Left lung (tissue), 14 donors: ENCODE measurements at regions of chr13 and their contacts with region 1.

Region 1: DNA sequence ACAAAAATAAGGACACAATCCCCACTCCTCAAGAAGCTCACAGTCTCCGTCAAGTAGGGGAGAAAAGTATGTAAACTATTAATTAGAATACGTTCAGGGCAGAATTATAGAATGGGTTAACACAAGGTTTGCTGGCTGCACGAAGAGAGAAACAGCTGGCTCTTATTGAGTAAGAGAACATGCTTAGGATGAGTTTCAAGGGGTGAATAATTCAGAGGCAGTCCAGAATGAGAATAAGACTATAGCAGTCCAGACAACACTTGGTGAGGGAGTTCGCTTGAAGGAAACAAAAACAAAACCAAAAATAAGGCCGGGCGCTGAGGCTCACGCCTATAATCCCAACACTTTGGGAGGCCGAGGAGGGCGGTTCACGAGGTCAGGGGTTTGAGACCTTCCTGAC is 61.9 kb downstream of the THSD1 start:
- DNase-seq: no peak
- ATAC-seq: peak; percentile 52
- H3K4me3 ChIP-seq: no peak overlapping the region
- H3K27ac ChIP-seq: peak overlapping the region in 1 of 2 donors; percentile 56
- H3K4me1 ChIP-seq: peaks cover 0 to 4% of the 10 kb centered on the region in 2 donors
- H3K27me3 ChIP-seq: no peaks in the 10 kb centered on the region
- CTCF ChIP-seq: no peak

Region 2: GRCh38 chr13:51906581-51906980 is 437.5 kb before region 1 on chr13:
- intact Hi-C with region 1: no loop called
- DNase-seq: peak in 1 of 4 donors; percentile 8
- ATAC-seq: no peak
- H3K4me3 ChIP-seq: no peak overlapping the region
- H3K27ac ChIP-seq: no peak overlapping the region
- H3K4me1 ChIP-seq: no peaks in the 10 kb centered on the region
- H3K27me3 ChIP-seq: no peaks in the 10 kb centered on the region
- CTCF ChIP-seq: no peak

Region 3: DNA sequence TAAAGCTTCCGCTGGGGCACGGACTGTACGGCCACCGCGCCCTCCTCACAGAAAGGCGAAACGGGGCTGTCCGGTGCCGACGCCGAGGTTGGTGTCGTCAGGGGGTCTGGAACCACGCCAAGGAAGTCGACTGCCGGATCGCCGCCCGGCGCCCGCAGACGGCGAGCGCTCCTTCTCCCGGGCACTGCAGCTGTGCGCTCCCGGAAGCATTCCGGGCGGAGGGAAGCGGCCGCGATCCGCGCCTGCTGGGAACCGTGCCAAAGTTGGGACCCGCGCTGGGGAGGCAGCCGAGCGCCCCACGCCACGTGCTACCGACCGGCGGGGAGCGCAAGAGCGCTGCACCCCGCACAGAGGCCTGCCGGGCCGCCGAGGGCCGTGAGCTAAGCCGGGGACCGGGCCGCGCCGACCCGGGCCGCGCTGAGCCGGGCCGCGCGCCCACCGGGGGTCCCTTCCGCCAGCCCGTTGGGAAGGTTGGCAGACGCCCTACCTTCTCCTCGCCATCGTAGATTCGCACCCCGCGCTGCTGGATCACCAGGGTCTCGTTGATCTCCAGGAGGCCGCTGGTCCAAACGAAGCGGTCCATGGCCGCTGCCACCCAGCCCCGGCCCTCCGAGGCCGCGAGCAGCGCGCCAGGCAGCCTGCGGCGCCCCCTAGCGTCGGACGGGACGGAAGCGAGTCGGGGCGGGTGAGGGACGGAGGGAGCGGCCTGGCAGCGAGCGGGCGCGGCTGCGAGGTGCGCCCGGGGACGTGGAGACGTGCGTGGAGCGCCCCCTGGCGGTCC is 106.1 kb after region 1 on chr13 and contains the start of gene VPS36:
- intact Hi-C with region 1: loop called in 1 of 2 experiments (anchors 5 kb)
- DNase-seq: peak; percentile 96 to 100 (median 97)
- ATAC-seq: peak; percentile 90
- H3K4me3 ChIP-seq: peak within 1 kb of the TSS; percentile 61 to 65
- H3K27ac ChIP-seq: peak within 1 kb of the TSS; percentile 94 to 99
- H3K4me1 ChIP-seq: peaks cover 12 to 40% of the 10 kb centered on the region in 2 donors
- H3K27me3 ChIP-seq: no peaks in the 10 kb centered on the region
- CTCF ChIP-seq: peak; percentile 100
- polyA plus RNA-seq, gene VPS36: 57.7 to 85.2 (median 70.9) TPM